Colonic mucosa (tissue), 4 donors: ENCODE measurements at regions of chr6 and their contacts with region 1.

Region 1: GRCh38 chr6:151765444-151765886 is 42.0 kb upstream of the ESR1 start:
- DNase-seq: peak; percentile 60
- H3K4me3 ChIP-seq: no peak overlapping the region
- H3K27ac ChIP-seq: no peak overlapping the region
- H3K4me1 ChIP-seq: no peaks in the 10 kb centered on the region
- H3K27me3 ChIP-seq: no peaks in the 10 kb centered on the region
- CTCF ChIP-seq: peak; percentile 74

Region 2: DNA sequence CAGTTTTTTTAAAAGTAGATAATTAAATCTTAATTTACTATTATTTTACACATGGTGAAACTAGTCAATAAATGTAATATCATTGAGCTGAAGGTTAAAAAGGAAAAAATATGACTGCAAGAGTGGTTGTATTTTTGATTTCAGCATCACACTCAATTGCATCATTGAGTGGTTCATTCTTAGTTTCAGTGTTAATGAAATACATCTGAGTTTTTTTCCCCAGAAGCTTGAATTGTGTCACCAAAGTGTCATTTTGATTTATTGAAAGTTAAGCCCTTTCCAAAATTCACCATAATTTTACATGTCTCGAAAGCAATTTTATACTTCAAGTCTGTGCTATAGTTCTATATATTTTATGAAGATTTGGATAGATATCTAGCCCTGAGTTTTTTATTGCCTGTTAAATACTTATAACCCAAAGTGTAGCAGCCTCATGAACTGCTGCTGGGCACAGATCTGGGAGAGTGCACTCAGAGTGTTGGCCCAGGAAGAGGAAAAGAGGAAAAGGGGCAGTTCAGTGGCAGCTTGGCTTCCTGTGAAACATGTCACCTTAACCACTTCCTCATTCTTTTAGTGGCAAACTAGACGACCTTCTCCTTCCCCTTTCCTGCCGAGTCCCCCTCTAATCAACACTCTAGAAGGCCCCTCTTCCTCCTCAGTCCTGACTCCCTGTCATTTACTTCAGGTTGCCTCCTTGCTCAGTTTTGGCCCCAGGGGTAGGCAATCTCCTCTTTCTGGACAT is 182.7 kb after region 1 on chr6:
- intact Hi-C with region 1: no loop called
- DNase-seq: no peak
- H3K4me3 ChIP-seq: no peak overlapping the region
- H3K27ac ChIP-seq: no peak overlapping the region
- H3K4me1 ChIP-seq: no peaks in the 10 kb centered on the region
- H3K27me3 ChIP-seq: no peaks in the 10 kb centered on the region
- CTCF ChIP-seq: no peak

Region 3: DNA sequence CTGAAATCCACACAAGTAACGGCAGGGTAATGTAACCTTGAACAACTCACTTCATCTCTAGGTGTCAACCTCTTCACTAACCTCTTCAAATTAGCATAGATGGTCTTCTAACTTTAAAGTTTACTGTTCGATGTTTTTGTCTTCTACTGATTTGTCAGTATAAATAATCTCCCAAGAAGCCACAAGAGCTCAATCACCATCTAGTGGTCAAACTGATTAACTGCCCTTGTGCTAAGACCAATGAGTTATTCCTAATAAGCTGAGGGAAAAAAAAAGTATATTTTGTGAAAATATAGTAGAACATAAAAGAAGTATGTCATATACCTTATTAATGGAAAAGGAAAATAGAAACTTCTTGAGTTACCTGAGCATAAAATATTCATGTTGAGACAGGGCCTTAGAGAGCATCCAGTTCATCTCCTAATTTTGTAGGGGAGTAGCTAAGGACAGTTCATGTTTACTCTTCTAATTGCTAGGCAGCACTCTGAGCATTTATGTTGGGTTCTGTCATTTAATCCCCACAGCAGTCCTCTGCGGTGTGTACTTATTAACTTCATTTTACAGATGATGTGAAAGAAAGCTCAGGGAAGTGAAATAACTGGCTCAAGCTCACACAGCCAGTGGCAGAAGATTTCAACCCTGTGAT is 359.1 kb after region 1 on chr6:
- intact Hi-C with region 1: loop called (anchors 5 kb)
- DNase-seq: no peak
- H3K4me3 ChIP-seq: no peak overlapping the region
- H3K27ac ChIP-seq: no peak overlapping the region
- H3K4me1 ChIP-seq: no peaks in the 10 kb centered on the region
- H3K27me3 ChIP-seq: no peaks in the 10 kb centered on the region
- CTCF ChIP-seq: peak; percentile 55

Region 4: DNA sequence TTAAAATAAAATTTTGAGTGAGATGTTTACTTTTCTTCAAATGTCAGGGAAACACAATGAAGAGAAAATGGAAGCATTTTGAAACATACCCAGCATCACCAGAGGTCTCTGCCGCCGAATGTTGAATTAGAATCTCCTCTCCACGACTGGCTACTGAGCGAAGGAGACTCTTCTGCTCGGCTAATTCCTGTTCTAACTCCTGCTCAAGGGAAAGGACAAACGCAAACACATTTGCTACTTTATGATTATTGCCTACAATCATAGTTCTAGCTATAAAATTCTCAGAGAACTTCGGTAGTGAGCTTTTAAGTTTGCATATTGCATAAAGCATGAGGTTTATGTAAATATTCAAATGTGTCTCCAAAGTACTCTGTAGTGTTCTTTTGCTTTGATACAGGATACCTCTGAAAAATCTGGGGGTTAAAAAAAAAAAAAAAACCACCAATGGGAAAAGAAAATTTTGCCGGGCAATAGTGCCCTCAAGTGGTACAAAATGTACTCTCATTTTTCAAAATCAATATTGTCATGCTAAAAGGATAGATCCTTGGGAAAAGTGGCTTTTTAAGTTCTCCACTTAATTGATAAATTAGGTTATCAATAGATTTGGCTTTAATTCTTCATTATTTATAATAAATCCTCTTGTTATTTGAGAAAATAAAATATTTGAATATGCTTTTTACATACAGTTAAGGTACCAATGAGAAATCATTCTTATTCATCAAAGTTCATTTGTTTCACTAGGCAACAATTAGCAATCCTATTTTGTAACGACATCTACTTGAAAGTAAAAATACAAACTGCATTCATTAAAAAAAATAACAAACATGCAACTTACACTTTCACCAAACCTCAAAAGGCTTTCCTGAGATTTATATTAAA is 502.7 kb after region 1 on chr6:
- intact Hi-C with region 1: loop called (anchors 10 kb)
- DNase-seq: no peak
- H3K4me3 ChIP-seq: no peak overlapping the region
- H3K27ac ChIP-seq: no peak overlapping the region
- H3K4me1 ChIP-seq: peaks cover 4% of the 10 kb centered on the region
- H3K27me3 ChIP-seq: no peaks in the 10 kb centered on the region
- CTCF ChIP-seq: peak; percentile 46